Posterior vena cava (tissue), 2 donors: ENCODE measurements at regions of chr16 and their contacts with region 1.

Region 1: GRCh38 chr16:7550096-7550495 is 217.5 kb downstream of the RBFOX1 start:
- DNase-seq: no peak

Region 2: GRCh38 chr16:7268182-7268581 is 281.9 kb before region 1 on chr16:
- intact Hi-C with region 1: no loop called
- DNase-seq: no peak

Region 3: DNA sequence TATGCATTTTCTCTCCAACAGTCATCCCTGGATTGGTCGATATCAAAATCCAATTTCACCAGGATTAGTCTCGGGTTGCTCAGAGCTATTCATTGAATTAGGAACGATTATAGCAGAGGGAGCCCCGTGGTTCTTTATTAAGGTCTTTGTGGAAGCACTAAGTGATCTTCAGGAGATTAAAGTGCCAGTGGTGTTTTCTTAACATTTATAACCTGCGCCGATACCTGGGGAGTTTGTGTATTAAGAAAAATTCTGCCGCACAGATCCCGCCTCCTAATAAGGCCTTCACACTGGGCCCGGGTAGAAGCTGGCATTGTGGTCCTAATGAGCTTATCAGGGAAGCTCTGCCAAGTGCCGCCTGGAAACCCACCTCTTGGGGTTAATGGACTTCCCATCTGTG is 21.3 kb after region 1 on chr16:
- intact Hi-C with region 1: no loop called
- DNase-seq: no peak

Region 4: DNA sequence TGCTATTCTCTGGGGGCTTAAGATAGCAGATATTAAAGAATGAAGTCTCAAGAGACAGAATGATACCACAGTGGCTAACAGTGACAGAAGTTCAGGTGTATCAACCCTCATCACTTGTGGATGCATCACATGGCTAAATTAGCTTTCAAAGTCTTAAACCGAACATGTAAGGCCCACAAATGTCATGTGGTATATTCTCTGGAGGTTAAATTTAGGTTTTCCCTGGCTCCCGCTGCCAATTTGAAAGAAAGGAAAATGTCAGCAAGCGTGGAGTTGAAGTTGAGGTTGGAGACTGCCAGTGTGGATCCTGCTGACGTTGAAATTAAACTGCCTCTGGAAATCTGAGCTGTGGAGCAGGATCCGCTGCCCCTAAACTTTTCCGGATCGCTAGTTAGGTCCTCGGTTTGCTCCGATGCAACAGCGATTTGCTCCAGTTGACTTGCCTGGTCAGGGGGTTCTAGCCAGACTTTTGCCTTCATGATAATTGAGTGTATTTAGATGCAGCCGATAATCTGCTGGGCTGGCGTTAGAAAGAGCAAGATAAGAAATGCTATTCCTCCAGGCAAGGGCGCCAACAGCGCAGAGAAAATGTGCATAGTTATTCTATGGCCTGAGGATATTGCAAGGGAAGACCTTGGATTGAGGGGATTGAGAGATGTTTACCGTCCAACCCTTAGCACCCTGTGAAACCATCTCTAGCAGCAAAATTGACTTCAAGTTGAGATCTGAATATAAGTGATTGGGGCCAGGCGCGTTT is 596.3 kb after region 1 on chr16:
- intact Hi-C with region 1: loop called in 1 of 2 experiments (anchors 5 kb)
- DNase-seq: no peak